Natural killer cell (primary cell): ENCODE measurements at regions of chr12 and their contacts with region 1.

Region 1: GRCh38 chr12:52884526-52885293 is 20.2 kb downstream of the KRT8 start:
- DNase-seq: peak; percentile 75 to 85
- ATAC-seq: peak; percentile 72 to 85 (median 77)
- H3K4me3 ChIP-seq: no peak overlapping the region
- H3K4me3 Mint-ChIP-seq: no peak overlapping the region
- H3K27ac ChIP-seq: no peak overlapping the region
- H3K27ac Mint-ChIP-seq: no peak overlapping the region
- H3K4me1 ChIP-seq: peaks cover 5% of the 10 kb centered on the region
- H3K4me1 Mint-ChIP-seq: peaks cover 0 to 7% of the 10 kb centered on the region in 2 donors
- H3K27me3 ChIP-seq: no peaks in the 10 kb centered on the region
- H3K27me3 Mint-ChIP-seq: peaks cover 8% of the 10 kb centered on the region in 2 donors
- CTCF ChIP-seq: peak; percentile 92

Region 2: DNA sequence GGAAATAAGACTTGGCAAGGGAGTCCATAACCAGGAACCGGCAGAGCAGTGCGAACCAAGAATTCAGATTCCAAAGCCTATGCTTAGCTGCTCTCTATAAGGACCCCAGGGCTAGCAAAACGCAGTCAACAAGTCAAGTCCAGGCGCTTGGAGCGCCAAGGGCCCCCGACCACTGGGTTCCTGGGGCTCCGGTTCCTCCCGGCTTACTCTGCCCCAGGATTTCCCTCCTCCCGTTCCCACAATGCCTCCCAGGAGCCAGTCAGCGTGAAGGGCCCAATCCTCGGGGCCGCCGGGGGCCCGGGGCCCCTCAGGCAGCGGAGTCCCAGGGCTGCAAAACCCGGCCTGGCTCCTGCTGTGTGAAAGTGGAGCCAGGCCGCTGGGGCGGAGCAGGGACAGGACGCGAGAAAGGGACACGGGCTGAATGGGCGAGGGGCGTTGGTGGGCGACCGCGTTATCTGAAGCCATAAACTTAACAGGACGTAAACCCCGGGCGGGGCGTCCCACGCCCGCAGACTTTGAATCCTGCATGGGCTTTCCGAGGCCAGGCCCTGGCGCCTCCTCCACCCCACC is 18.7 kb after region 1 on chr12:
- intact Hi-C with region 1: no loop called
- DNase-seq: peak; percentile 44 to 72
- ATAC-seq: peak; percentile 70 to 88 (median 85)
- H3K4me3 ChIP-seq: no peak overlapping the region
- H3K4me3 Mint-ChIP-seq: peak overlapping the region; percentile 21
- H3K27ac ChIP-seq: no peak overlapping the region
- H3K27ac Mint-ChIP-seq: peak overlapping the region in 1 of 2 donors; percentile 58
- H3K4me1 ChIP-seq: peaks cover 21% of the 10 kb centered on the region
- H3K4me1 Mint-ChIP-seq: peaks cover 0 to 20% of the 10 kb centered on the region in 2 donors
- H3K27me3 ChIP-seq: peaks cover 9% of the 10 kb centered on the region
- H3K27me3 Mint-ChIP-seq: peaks cover 0 to 28% of the 10 kb centered on the region in 2 donors
- CTCF ChIP-seq: no peak

Region 3: GRCh38 chr12:52929538-52929937 is 44.8 kb after region 1 on chr12:
- intact Hi-C with region 1: no loop called
- DNase-seq: no peak
- ATAC-seq: no peak
- H3K4me3 ChIP-seq: no peak overlapping the region
- H3K4me3 Mint-ChIP-seq: no peak overlapping the region
- H3K27ac ChIP-seq: no peak overlapping the region
- H3K27ac Mint-ChIP-seq: no peak overlapping the region
- H3K4me1 ChIP-seq: no peaks in the 10 kb centered on the region
- H3K4me1 Mint-ChIP-seq: no peaks in the 10 kb centered on the region
- H3K27me3 ChIP-seq: no peaks in the 10 kb centered on the region
- H3K27me3 Mint-ChIP-seq: peaks cover 6 to 9% of the 10 kb centered on the region in 2 donors
- CTCF ChIP-seq: no peak

Region 4: GRCh38 chr12:52980693-52981423 is 96.1 kb after region 1 on chr12:
- intact Hi-C with region 1: loop called (anchors 1 kb)
- DNase-seq: peak; percentile 65 to 92
- ATAC-seq: peak; percentile 94 to 99 (median 98)
- H3K4me3 ChIP-seq: no peak overlapping the region
- H3K4me3 Mint-ChIP-seq: no peak overlapping the region
- H3K27ac ChIP-seq: no peak overlapping the region
- H3K27ac Mint-ChIP-seq: no peak overlapping the region
- H3K4me1 ChIP-seq: peaks cover 4% of the 10 kb centered on the region
- H3K4me1 Mint-ChIP-seq: peaks cover 0 to 7% of the 10 kb centered on the region in 2 donors
- H3K27me3 ChIP-seq: peaks cover 5% of the 10 kb centered on the region
- H3K27me3 Mint-ChIP-seq: peaks cover 28 to 33% of the 10 kb centered on the region in 2 donors
- CTCF ChIP-seq: peak; percentile 98

Region 5: DNA sequence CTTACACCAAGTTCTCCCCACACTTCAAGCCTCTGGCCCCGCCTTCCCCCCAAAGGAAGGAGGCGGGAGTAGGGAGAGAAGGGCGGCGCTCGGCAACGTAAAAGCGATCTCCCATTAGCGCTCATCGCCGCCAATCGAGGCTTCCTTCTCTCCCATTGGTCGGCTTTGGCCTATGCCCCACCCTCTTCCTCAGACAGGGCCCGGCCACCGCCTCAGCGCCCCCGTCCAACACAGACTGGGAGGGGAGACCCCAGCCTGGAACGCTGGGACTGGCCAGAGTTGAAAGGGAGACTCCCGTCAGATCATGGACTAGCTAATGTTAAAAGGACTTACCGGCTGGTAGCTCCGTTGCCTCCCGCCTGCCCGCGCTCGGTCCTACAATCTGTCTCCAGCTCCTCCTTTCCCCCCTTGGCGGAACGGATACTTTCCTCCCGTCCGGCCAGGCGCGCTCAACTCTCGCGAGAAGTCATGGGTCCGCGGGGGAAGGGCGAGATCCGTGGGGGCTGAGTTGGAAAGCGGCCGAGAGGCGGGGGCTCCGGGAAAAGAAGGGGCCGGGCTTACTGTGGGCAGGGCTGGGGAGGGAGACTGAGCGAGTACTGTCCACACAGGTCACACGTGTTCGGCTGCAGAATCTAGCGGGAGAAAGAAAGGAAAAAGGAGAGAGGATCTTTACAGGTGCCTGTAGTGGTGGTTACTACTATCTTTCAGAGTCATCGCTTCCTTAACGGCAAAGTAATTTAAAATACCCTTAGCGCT is 741.4 kb after region 1 on chr12 and contains the start of gene ATF7:
- intact Hi-C with region 1: no loop called
- DNase-seq: peak; percentile 98 to 99
- ATAC-seq: peak; percentile 91 to 98 (median 94)
- H3K4me3 ChIP-seq: peak within 1 kb of the TSS; percentile 68
- H3K4me3 Mint-ChIP-seq: peak within 1 kb of the TSS; percentile 100
- H3K27ac ChIP-seq: peak within 1 kb of the TSS; percentile 85
- H3K27ac Mint-ChIP-seq: peak within 1 kb of the TSS; percentile 94 to 95
- H3K4me1 ChIP-seq: peaks cover 8% of the 10 kb centered on the region
- H3K4me1 Mint-ChIP-seq: peaks cover 40 to 43% of the 10 kb centered on the region in 2 donors
- H3K27me3 ChIP-seq: no peaks in the 10 kb centered on the region
- H3K27me3 Mint-ChIP-seq: no peaks in the 10 kb centered on the region
- CTCF ChIP-seq: no peak
- total RNA-seq, gene ATF7: 32.3 to 42.3 (median 34.9) TPM